GM10248 (cell line): ENCODE measurements at regions of chr2 and their contacts with region 1.

Region 1: DNA sequence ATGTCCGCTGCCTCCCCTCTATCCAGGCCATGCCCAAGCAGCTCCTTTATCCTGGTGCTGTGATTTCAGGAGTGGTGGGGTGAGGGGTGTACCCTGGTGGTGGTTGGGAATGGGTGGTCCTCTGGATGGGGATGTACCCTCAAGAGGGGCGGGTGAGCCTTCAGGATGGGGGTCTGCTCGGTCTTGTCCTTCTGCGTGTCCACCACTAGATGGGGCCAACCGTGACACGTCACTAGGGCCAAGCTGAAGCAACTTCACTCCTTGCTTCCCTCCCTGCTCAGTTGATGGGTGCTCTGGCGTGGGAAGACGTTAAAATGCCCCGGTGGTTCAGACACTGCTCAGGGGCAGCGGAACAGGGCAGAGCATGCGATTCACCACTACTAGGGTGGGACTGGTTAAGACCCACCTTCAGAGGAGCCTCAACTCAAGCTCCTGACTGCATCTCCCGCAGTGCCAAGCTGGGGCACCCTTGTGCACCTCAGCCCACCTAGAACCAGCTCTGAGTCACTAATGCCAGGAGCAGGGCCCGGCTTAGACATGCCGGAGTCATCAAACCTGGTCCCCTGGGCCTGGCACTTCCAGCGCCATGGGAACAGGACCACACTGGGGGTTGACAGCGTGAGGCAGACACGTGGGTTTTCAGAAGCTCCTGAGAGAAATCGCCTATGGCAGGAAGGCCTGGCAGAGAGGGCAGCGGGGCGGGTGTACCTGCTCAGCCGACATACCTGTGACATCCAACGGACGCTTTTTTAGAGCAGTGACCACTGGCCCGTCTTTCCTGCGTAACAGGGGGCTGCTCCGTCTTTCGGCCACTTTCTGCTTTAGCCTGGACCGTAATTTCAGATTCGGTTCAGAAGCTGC is 256.7 kb downstream of the HDAC4 start:
- DNase-seq: peak; percentile 68
- CTCF ChIP-seq: peak; percentile 44

Region 2: DNA sequence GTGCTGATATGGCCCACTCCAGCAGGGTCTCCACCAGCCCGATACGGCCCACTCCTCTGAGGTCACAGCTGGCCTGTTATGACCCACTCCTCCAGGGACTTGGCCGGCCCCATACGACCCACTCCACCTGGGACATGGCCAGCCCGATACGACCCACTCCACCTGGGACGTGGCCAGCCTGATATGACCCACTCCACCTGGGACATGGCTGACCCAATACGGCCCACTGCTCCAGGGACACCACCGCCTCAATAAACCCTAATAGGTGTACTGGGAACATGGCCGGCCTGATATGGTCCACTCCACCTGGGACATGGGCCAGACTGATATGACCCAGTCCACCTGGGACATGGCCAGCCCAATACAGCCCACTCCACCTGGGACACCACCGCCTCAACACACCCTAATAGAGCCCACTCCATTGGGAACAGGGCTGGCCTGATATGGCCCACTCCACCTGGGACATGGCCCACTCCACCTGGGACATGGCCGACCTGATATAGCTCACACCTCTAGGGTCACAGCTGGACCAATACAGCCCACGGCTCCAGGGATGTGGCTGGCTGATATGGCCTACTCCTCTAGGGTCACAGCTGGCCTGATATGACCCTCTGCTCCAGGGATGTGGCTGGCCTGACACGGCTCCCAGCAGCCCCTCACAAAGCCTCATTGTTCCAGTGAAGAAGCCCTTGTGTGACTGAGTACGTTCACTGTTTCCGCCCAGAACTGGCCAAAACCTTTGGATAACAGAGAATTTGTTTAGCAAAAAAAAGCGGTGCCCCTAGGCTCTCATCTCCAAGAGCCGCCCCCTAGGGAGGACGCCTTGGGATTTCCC is 11.1 kb after region 1 on chr2:
- CTCF ChIA-PET with region 1: interaction called, 12 read pairs
- POLR2A ChIA-PET with region 1: no interaction called
- DNase-seq: no peak
- CTCF ChIP-seq: no peak